ENCODE measurements at regions of chr20 and their contacts with region 1.

Region 1: DNA sequence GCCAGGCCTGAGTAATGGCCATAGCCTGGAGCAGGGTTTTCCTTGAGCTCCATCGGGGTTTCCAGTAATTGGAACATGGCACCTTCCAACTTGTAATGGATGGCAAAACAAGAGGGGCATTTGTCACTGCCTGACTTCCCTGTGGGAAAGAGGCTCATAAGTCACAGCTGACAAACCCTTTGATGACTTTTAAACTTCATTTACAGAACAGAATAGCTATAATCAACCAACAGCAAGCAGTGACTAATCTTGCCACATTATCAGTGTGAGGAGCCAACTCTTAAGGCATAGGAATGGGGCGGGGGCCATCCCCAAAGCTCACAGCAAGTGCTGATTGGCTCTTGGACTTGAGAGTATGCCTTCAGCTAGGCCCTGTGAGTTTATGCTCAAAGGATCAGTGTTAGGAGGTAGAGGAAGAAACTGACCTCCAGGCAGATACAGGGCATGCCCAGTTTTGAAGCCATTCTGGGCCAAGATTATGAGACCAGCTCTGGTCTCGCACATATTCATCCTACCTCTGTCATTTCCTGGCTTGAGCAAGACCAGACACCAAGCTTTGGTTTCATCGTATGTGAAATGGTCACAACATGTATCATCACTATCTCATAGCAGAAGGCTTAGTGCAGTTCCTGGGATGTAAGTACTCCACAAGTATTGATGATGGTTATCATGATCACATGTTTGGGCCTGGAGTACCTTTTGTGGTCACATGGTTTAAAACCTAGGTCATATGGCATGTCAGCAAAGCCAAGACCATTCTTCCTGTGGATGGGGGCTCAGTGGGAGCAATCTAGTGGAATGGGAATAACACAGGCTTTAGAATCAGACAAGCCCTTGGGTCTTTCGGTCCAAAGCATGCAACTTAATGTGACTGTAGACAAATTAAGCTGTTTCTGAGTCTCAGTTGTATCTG is 49.2 kb downstream of the EIF2S2 start:
- DNase-seq: no peak
- ATAC-seq: peak in 3 of 4 donors; percentile 41 to 48 (median 41)
- H3K4me3 ChIP-seq: no peak overlapping the region
- H3K27ac ChIP-seq: no peak overlapping the region
- H3K4me1 ChIP-seq: peaks cover 8% of the 10 kb centered on the region
- H3K27me3 ChIP-seq: no peaks in the 10 kb centered on the region
- CTCF ChIP-seq: no peak

Region 2: DNA sequence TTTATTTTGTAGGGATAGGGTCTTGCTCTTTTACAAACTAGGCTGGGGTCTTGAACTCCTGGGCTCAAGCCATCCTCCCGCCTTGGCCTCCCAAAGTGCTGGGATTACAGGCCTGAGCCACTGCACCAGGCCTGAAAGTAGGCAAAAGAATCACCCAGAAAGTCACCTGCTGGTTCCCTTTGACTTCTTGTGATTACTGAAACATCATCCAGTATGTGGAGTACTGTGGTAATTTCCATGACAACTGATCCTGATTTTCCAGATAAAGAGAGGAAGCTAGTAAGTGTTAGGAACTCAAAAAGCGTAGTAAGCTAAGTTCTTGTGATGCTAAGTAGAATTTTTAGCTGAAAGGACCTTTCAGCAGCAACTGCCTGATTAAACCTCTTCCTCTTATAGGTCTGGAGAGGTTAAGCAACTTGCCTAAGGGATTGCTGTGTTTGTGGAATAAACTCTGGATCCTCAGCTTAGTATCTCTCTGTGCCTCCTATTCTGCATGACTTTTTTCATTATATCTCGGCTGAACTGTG is 52.4 kb before region 1 on chr20:
- intact Hi-C with region 1: loop called in 1 of 2 experiments (anchors 5 kb)
- DNase-seq: no peak
- ATAC-seq: no peak
- H3K4me3 ChIP-seq: no peak overlapping the region
- H3K27ac ChIP-seq: no peak overlapping the region
- H3K4me1 ChIP-seq: peaks cover 69% of the 10 kb centered on the region
- H3K27me3 ChIP-seq: no peaks in the 10 kb centered on the region
- CTCF ChIP-seq: no peak

Region 3: DNA sequence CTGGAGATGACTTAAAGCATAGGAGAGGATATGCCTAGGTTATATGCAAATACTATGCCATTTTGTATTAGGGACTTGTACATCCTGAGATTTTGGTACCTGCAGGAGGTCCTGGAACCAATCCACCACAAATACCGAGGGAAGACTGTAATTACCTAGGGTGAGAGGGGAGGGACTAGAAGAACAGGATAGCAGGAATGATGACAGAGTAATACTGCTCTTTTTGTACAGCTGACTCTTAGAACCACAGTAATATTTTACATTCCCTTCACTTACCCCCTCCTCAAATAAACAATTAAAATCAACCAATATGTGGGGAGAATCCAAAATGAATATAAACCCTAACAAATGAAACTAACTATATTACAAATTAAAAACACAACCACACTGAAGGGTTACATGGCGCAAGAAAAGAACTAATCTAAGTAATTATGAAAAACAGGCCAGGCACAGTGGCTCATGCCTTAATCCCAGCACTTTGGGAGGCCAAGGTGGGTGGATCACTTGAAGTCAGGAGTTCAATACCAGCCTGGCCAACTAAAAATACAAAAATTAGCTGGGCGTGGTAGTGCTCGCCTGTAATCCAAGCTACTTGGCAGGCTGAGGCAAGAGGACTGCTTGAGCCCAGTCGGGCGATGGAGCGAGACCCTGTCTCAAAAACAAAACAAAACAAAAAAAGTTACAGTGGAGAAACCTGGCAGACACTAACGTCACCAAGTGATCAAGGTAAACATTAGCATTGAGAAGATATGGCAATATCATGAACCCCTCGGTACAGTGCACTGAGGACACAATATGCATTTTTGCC is 532.8 kb after region 1 on chr20:
- intact Hi-C with region 1: no loop called
- DNase-seq: no peak
- ATAC-seq: no peak
- H3K4me3 ChIP-seq: no peak overlapping the region
- H3K27ac ChIP-seq: no peak overlapping the region
- H3K4me1 ChIP-seq: no peaks in the 10 kb centered on the region
- H3K27me3 ChIP-seq: no peaks in the 10 kb centered on the region
- CTCF ChIP-seq: no peak